ENCODE measurements at regions of chr2 and their contacts with region 1.

Region 1: GRCh38 chr2:99489761-99490622 is at the start of gene REV1:
- DNase-seq: peak; percentile 94
- ATAC-seq: peak; percentile 94
- total RNA-seq, gene REV1: 59.2 TPM

Region 2: DNA sequence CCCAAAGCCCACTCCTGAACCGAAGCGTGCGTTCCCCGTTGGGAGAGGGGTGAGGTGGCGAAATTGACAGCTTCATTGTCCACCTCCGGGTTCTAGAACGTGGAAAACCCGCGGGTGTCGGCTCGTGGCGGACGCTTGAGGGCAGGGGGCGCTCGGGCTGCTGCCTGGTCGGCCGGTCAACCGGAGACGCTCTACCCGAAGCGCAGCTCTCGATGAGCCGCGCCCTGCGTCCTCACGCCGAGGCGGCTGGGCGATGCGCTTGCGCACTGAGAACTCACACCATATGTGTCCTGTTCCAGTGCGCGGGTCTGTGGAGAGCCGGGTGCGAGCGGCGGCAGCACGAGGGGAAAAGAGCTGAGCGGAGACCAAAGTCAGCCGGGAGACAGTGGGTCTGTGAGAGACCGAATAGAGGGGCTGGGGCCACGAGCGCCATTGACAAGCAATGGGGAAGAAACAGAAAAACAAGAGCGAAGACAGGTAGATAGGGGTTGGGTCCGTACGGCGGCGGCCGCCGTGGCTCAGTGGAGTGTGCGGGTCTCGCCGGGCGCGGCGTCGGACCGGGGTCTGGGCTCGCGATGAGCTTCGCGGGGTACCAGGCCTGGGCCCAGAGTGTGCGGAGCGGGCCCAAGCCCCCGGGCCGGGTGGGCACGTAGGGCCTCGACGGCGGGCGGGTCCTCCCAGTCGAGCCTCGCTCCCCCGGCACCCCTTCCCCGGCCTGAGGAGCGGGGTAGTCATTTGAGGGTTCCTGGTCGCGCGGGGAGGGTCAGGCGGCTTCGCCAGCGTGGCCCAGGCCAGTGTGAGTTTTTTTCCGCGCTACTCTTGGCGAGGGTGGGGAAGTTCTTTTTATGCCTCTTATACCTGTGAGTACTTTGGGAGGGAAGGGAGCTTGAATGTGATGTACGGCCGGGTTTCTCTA is 152.6 kb before region 1 on chr2 and contains the start of gene EIF5B:
- intact Hi-C with region 1: loop called (anchors 2 kb)
- DNase-seq: peak; percentile 98
- ATAC-seq: peak; percentile 94
- total RNA-seq, gene EIF5B: 84.7 TPM

Region 3: DNA sequence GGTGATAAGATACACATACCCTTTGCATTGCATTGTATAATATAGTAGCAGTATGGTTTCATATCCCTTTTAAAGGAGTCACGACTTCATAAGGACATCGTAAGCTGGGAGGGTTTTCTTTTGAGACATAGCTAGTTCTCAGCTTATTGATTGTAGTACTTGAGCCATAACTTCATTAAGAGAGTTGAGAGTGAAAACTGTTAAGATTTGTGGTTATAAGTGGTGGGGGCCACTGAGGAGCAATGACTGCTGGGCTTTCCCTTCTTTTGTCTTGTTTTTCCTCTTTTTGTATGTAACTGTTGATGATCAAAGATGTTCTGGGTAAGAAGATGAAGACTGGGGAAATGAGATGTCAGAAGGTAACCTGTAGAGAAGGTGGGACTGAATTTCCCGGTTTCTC is 141.8 kb before region 1 on chr2:
- intact Hi-C with region 1: no loop called
- DNase-seq: no peak
- ATAC-seq: no peak

Region 4: GRCh38 chr2:99442837-99443236 is 47.2 kb before region 1 on chr2:
- intact Hi-C with region 1: loop called (anchors 2 kb)
- DNase-seq: no peak
- ATAC-seq: peak; percentile 81

Measured in Right ventricle myocardium superior (tissue), 1 donor.